ENCODE measurements at regions of chr20 and their contacts with region 1.

Region 1: GRCh38 chr20:57522380-57522993 is 2.5 kb downstream of the CTCFL start:
- DNase-seq: no peak
- ATAC-seq: no peak
- H3K4me3 ChIP-seq: no peak overlapping the region
- H3K27ac ChIP-seq: no peak overlapping the region
- H3K4me1 ChIP-seq: no peaks in the 10 kb centered on the region
- H3K27me3 ChIP-seq: no peaks in the 10 kb centered on the region
- CTCF ChIP-seq: no peak

Region 2: GRCh38 chr20:58169450-58169849 is 647.0 kb after region 1 on chr20:
- intact Hi-C with region 1: no loop called
- DNase-seq: no peak
- ATAC-seq: no peak
- H3K4me3 ChIP-seq: no peak overlapping the region
- H3K27ac ChIP-seq: no peak overlapping the region
- H3K4me1 ChIP-seq: no peaks in the 10 kb centered on the region
- H3K27me3 ChIP-seq: no peaks in the 10 kb centered on the region
- CTCF ChIP-seq: no peak

Region 3: GRCh38 chr20:58209652-58210397 is 687.3 kb after region 1 on chr20:
- intact Hi-C with region 1: loop called (anchors 5 kb)
- DNase-seq: peak; percentile 92
- ATAC-seq: peak; percentile 95
- H3K4me3 ChIP-seq: no peak overlapping the region
- H3K27ac ChIP-seq: no peak overlapping the region
- H3K4me1 ChIP-seq: no peaks in the 10 kb centered on the region
- H3K27me3 ChIP-seq: peaks cover 8% of the 10 kb centered on the region
- CTCF ChIP-seq: peak; percentile 100